T-cell (primary cell): ENCODE measurements at regions of chr22 and their contacts with region 1.

Region 1: GRCh38 chr22:30386960-30387827 is at the start of gene RNF215:
- DNase-seq: peak; percentile 41 to 91 (median 68)
- ATAC-seq: peak; percentile 85 to 89 (median 86)
- H3K4me3 ChIP-seq: peak within 1 kb of the TSS; percentile 35 to 53
- H3K4me3 Mint-ChIP-seq: peak within 1 kb of the TSS; percentile 66 to 77 (median 73)
- H3K27ac ChIP-seq: no peak within 1 kb of the TSS
- H3K27ac Mint-ChIP-seq: peak within 1 kb of the TSS; percentile 49 to 68
- H3K4me1 ChIP-seq: peaks cover 3 to 22% of the 10 kb centered on the region in 2 experiments
- H3K4me1 Mint-ChIP-seq: peaks cover 15 to 24% (median 20%) of the 10 kb centered on the region in 3 donors
- H3K27me3 ChIP-seq: peaks cover 0 to 4% of the 10 kb centered on the region in 2 experiments
- H3K27me3 Mint-ChIP-seq: no peaks in the 10 kb centered on the region
- total RNA-seq, gene RNF215: 6.2 to 8.4 (median 6.3) TPM

Region 2: DNA sequence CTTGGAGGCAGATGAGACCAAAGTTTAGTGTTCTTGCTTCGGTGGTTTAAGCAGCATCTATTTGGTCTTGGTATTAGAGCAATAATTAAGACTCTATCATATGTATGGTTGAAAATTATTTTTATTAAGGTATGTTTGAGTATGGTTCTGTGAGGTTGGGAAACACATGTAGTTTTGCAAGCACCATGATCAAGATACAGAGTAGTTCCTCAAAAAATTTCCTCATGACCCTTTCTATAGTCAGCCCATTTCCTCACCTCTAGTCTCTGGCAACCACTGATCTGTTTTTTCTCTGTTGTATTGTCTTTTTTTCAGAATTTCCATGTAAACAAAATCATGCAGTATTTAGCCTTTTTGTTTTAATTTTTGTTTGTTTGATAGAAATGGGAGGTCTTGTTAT is 485.8 kb before region 1 on chr22:
- CTCF ChIA-PET with region 1: no interaction called
- POLR2A ChIA-PET with region 1: interaction called in 1 of 2 experiments, 14 read pairs
- DNase-seq: no peak
- ATAC-seq: no peak
- H3K4me3 ChIP-seq: no peak overlapping the region
- H3K4me3 Mint-ChIP-seq: no peak overlapping the region
- H3K27ac ChIP-seq: no peak overlapping the region
- H3K27ac Mint-ChIP-seq: no peak overlapping the region
- H3K4me1 ChIP-seq: peaks cover 0 to 4% of the 10 kb centered on the region in 2 experiments
- H3K4me1 Mint-ChIP-seq: peaks cover 53 to 56% (median 53%) of the 10 kb centered on the region in 3 donors
- H3K27me3 ChIP-seq: no peaks in the 10 kb centered on the region
- H3K27me3 Mint-ChIP-seq: no peaks in the 10 kb centered on the region

Region 3: DNA sequence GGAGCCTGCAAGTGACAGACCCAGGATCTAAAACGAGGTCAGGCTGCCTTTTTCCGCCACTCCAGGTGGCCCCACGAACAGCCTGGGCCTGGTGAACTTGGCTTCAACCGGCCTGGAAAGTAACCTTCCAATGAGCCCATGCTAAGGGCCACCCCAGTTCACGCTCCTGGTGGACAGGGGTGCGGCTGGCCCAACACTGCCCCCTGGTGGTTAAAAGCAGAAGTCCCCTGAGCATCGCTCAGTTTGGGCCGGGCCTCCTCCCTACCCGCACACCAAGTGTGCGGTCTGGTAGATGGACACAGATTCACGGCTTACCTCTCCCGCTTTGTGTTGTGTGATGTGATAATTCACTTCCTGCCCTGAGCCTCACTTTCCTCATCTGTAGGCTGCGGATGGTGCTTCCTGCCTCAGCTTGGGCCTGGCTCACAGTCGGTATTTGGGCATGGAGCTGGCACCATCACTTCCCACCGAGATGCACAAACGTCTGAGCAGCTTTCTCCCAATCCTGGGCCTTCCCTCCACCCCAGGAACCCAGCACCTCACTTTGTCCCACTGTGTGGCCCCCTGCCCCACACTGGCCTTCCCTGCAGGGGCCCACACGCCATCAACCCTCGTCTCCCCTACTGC is 98.3 kb after region 1 on chr22:
- CTCF ChIA-PET with region 1: interaction called, 12 read pairs
- POLR2A ChIA-PET with region 1: no interaction called
- DNase-seq: peak; percentile 37 to 87 (median 70)
- ATAC-seq: peak; percentile 93 to 99 (median 96)
- H3K4me3 ChIP-seq: no peak overlapping the region
- H3K4me3 Mint-ChIP-seq: no peak overlapping the region
- H3K27ac ChIP-seq: no peak overlapping the region
- H3K27ac Mint-ChIP-seq: no peak overlapping the region
- H3K4me1 ChIP-seq: peaks cover 0 to 8% of the 10 kb centered on the region in 2 experiments
- H3K4me1 Mint-ChIP-seq: peaks cover 0 to 7% (median 0%) of the 10 kb centered on the region in 3 donors
- H3K27me3 ChIP-seq: peaks cover 0 to 18% of the 10 kb centered on the region in 2 experiments
- H3K27me3 Mint-ChIP-seq: peaks cover 3 to 7% of the 10 kb centered on the region in 2 donors